Activated CD4-positive, alpha-beta memory T cell treated with anti-CD3 and anti-CD28 coated beads for 36 hours (primary cell): ENCODE measurements at regions of chr1 and their contacts with region 1.

Region 1: DNA sequence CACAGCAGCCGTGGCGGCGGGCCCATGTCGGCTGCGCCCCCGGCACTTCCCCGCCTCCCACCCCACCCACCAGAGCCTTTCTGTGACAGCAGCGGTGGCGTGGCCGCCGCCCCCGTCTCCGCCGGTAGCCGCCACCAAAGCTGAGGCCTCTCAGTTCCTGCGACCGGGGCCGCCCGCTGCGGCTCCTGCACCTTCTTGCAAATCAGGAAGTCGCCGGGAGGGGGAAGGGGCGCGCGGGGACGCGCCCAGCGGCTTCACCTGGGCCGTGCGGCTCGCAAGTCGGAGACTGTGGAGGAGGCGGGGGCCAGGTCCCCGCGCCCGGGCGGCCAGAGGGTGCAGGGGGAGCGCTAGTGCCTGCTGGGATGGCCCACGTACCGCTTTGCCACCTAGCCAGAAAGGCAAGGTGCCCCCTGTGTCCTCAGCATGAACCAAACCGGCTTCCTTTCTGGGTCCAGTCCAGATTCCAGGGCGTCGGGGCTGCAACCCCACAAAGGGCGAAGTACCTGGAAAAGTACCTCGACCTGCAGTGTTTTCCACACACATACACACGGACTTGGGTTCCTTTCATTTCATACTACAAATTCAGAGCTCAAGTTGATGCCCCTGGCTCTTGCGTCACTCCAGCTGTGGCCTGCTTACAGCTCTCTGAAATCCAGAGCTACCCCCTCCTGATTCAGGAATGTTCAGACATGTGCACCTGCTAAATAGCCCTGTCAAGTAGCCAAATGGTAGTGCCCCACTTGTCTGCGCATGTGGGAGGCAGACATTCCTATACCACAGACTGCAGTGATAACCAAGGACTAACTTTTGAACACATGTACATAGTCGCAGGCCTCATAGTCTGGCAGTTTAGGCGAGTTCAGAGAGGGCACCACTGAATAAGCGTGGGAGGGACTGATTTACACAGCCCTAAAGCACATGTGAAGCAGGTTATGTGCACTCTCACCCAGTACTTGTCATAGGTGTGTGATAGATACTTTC is at the start of gene DENND1B:
- DNase-seq: peak; percentile 87
- H3K4me3 Mint-ChIP-seq: peak within 1 kb of the TSS; percentile 92
- H3K27ac Mint-ChIP-seq: peak within 1 kb of the TSS; percentile 100
- H3K4me1 Mint-ChIP-seq: peaks cover 69% of the 10 kb centered on the region
- H3K27me3 Mint-ChIP-seq: no peaks in the 10 kb centered on the region
- total RNA-seq, gene DENND1B: 12.5 to 15.6 TPM

Region 2: DNA sequence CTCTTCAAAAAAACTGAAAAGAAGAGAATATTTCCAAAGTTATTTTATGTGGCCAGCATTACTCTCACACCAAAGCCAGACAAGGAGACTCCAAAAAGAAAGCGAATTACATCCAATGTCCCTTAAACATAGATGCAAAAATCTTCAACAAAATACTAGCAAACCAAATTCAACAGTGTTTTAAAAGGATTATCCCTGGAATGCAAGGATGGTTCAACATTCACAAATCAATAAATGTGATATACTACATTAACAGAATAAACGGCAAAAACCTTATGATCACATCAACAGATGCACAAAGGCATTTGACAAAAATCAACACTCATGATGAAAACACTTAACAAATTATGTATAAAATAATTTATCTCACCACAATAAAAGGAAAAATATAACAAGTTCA is 208.1 kb before region 1 on chr1:
- CTCF ChIA-PET with region 1: no interaction called
- POLR2A ChIA-PET with region 1: no interaction called
- intact Hi-C with region 1: no loop called
- DNase-seq: no peak
- H3K4me3 Mint-ChIP-seq: no peak overlapping the region
- H3K27ac Mint-ChIP-seq: no peak overlapping the region
- H3K4me1 Mint-ChIP-seq: no peaks in the 10 kb centered on the region
- H3K27me3 Mint-ChIP-seq: no peaks in the 10 kb centered on the region

Region 3: GRCh38 chr1:197841883-197842553 is 66.4 kb after region 1 on chr1:
- CTCF ChIA-PET with region 1: no interaction called
- POLR2A ChIA-PET with region 1: no interaction called
- intact Hi-C with region 1: loop called (anchors 5 kb)
- DNase-seq: no peak
- H3K4me3 Mint-ChIP-seq: no peak overlapping the region
- H3K27ac Mint-ChIP-seq: no peak overlapping the region
- H3K4me1 Mint-ChIP-seq: peaks cover 3% of the 10 kb centered on the region
- H3K27me3 Mint-ChIP-seq: peaks cover 8% of the 10 kb centered on the region

Region 4: GRCh38 chr1:197890936-197891335 is 115.4 kb after region 1 on chr1:
- CTCF ChIA-PET with region 1: no interaction called
- POLR2A ChIA-PET with region 1: no interaction called
- intact Hi-C with region 1: no loop called
- DNase-seq: no peak
- H3K4me3 Mint-ChIP-seq: no peak overlapping the region
- H3K27ac Mint-ChIP-seq: no peak overlapping the region
- H3K4me1 Mint-ChIP-seq: no peaks in the 10 kb centered on the region
- H3K27me3 Mint-ChIP-seq: peaks cover 32% of the 10 kb centered on the region

Region 5: DNA sequence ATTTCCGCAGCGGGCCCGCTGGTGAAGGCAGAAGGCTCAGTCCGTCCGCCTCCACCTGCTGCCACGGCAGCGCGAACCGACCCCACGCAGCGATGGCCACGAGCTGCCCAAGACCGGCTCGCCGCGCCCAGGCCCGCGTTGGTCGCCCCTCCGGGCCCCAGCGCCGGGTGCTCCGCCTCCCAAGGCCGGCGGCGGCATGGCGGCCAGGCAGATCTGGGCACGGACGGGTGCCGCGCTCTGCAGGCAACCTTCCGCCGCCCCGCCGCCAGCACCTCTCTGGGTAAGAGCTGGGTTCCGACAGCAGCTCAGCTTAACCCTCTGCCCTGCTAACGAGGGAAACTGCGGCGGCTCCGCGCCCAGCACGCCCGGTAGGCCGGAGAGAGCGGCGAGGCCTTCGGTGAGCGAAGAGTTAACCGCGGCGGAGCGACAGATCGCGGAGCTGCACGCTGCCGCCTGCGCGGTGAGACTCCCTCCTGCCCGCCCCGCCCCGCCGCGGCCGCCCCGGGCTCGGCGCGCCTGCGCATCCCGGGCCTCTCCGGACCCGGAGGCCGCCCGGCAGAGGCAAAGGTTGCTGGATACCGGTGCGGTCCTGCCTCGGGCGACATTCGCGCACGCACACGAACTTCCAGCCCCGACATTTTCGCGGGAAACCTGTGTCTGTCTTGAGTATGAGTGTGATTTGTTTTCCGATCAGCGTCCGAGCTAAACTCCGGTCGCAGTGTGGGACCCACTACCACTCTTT is 127.1 kb after region 1 on chr1 and contains the start of gene C1orf53:
- CTCF ChIA-PET with region 1: no interaction called
- POLR2A ChIA-PET with region 1: interaction called, 4 read pairs
- intact Hi-C with region 1: loop called (anchors 2 kb)
- DNase-seq: peak; percentile 85
- H3K4me3 Mint-ChIP-seq: peak within 1 kb of the TSS; percentile 77
- H3K27ac Mint-ChIP-seq: peak within 1 kb of the TSS; percentile 50
- H3K4me1 Mint-ChIP-seq: peaks cover 9% of the 10 kb centered on the region
- H3K27me3 Mint-ChIP-seq: peaks cover 41% of the 10 kb centered on the region
- total RNA-seq, gene C1orf53: 0.40 to 0.58 TPM

Region 6: GRCh38 chr1:198620951-198621824 is 845.6 kb after region 1 on chr1:
- CTCF ChIA-PET with region 1: no interaction called
- POLR2A ChIA-PET with region 1: no interaction called
- intact Hi-C with region 1: loop called (anchors 2 kb)
- DNase-seq: peak; percentile 84
- H3K4me3 Mint-ChIP-seq: peak overlapping the region; percentile 74
- H3K27ac Mint-ChIP-seq: peak overlapping the region; percentile 94
- H3K4me1 Mint-ChIP-seq: peaks cover 87% of the 10 kb centered on the region
- H3K27me3 Mint-ChIP-seq: no peaks in the 10 kb centered on the region